ENCODE measurements at regions of chr3 and their contacts with region 1.

Region 1: GRCh38 chr3:48694610-48695392 is 9.1 kb upstream of the NCKIPSD start:
- DNase-seq: peak; percentile 60
- H3K4me3 ChIP-seq: peak overlapping the region in 1 of 3 experiments; percentile 17
- H3K27ac ChIP-seq: peak overlapping the region; percentile 85
- H3K4me1 ChIP-seq: peaks cover 21% of the 10 kb centered on the region
- H3K27me3 ChIP-seq: no peaks in the 10 kb centered on the region
- CTCF ChIP-seq: no peak
- POLR2A ChIP-seq: no peak

Region 2: GRCh38 chr3:48142316-48142870 is 552.4 kb before region 1 on chr3:
- CTCF ChIA-PET with region 1: no interaction called
- POLR2A ChIA-PET with region 1: no interaction called
- dilution Hi-C with region 1: no loop called
- intact Hi-C with region 1: no loop called
- DNase-seq: no peak
- H3K4me3 ChIP-seq: no peak overlapping the region
- H3K27ac ChIP-seq: no peak overlapping the region
- H3K4me1 ChIP-seq: peaks cover 9% of the 10 kb centered on the region
- H3K27me3 ChIP-seq: no peaks in the 10 kb centered on the region
- CTCF ChIP-seq: no peak
- POLR2A ChIP-seq: no peak

Region 3: GRCh38 chr3:48716982-48717746 is 22.4 kb after region 1 on chr3 and contains the start of gene IP6K2:
- CTCF ChIA-PET with region 1: no interaction called
- POLR2A ChIA-PET with region 1: interaction called, 4 read pairs
- dilution Hi-C with region 1: no loop called
- intact Hi-C with region 1: loop called (anchors 2 kb)
- DNase-seq: peak; percentile 99
- H3K4me3 ChIP-seq: peak within 1 kb of the TSS; percentile 81 to 99 (median 93)
- H3K27ac ChIP-seq: peak within 1 kb of the TSS; percentile 88
- H3K4me1 ChIP-seq: peaks cover 8% of the 10 kb centered on the region
- H3K27me3 ChIP-seq: peaks cover 5 to 8% of the 10 kb centered on the region in 2 experiments
- CTCF ChIP-seq: no peak
- POLR2A ChIP-seq: peak; percentile 97
- total RNA-seq, gene IP6K2: 72.4 and 81.8 TPM in 2 replicates

Region 4: GRCh38 chr3:48748754-48749153 is 54.0 kb after region 1 on chr3:
- CTCF ChIA-PET with region 1: no interaction called
- POLR2A ChIA-PET with region 1: no interaction called
- dilution Hi-C with region 1: no loop called
- intact Hi-C with region 1: no loop called
- DNase-seq: no peak
- H3K4me3 ChIP-seq: no peak overlapping the region
- H3K27ac ChIP-seq: no peak overlapping the region
- H3K4me1 ChIP-seq: no peaks in the 10 kb centered on the region
- H3K27me3 ChIP-seq: no peaks in the 10 kb centered on the region
- CTCF ChIP-seq: no peak
- POLR2A ChIP-seq: no peak